OCI-LY7 (cell line): ENCODE measurements at regions of chr1 and their contacts with region 1.

Region 1: DNA sequence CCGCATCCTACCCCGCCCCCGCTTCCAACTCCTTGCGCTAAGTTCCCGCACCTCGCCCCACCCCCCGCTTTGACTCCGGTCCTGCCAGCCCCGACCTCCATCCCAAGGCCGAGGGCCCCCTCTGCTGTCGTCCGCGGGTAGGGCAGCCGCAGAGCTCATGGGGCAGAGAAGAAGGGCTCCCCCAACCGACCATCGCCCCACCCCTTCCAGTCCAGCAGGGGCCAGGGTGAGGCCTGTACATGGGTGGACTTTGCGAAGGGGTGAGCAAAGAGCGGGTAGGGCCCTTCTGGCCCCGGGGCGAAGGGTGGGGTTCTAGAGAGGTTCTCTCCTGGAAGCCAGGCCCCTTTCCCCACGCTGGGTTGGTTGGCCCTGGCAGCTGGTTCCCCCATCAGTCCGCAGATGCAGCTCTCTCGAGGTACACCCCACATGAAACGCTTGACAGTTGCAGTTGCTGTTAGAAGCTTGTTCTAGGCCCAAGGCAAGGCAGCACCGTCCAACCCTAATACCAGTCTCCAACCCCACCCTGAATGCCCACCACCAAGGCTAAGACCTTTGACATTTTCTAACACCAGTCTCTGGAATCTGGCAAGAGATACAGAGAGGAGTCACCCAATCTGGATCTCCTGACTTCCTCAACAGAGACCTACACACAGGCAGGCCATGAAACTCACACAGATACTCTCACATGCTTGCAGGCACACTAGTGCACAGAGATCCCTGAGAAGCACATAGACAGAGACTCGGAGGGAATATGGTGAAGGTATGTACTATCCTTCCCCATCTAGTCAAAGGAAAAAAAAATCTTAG is 25.3 kb upstream of the ADGRB2 start:
- DNase-seq: peak; percentile 91
- H3K4me3 ChIP-seq: peak overlapping the region; percentile 77
- H3K27ac ChIP-seq: peak overlapping the region; percentile 82
- H3K4me1 ChIP-seq: peaks cover 44% of the 10 kb centered on the region
- CTCF ChIP-seq: peak; percentile 90

Region 2: GRCh38 chr1:31548907-31549808 is 240.3 kb before region 1 on chr1:
- CTCF ChIA-PET with region 1: interaction called, 4 read pairs
- POLR2A ChIA-PET with region 1: no interaction called
- intact Hi-C with region 1: loop called (anchors 1 kb)
- DNase-seq: peak; percentile 87
- H3K4me3 ChIP-seq: peak overlapping the region; percentile 2
- H3K27ac ChIP-seq: no peak overlapping the region
- H3K4me1 ChIP-seq: peaks cover 10% of the 10 kb centered on the region
- CTCF ChIP-seq: peak; percentile 99

Region 3: DNA sequence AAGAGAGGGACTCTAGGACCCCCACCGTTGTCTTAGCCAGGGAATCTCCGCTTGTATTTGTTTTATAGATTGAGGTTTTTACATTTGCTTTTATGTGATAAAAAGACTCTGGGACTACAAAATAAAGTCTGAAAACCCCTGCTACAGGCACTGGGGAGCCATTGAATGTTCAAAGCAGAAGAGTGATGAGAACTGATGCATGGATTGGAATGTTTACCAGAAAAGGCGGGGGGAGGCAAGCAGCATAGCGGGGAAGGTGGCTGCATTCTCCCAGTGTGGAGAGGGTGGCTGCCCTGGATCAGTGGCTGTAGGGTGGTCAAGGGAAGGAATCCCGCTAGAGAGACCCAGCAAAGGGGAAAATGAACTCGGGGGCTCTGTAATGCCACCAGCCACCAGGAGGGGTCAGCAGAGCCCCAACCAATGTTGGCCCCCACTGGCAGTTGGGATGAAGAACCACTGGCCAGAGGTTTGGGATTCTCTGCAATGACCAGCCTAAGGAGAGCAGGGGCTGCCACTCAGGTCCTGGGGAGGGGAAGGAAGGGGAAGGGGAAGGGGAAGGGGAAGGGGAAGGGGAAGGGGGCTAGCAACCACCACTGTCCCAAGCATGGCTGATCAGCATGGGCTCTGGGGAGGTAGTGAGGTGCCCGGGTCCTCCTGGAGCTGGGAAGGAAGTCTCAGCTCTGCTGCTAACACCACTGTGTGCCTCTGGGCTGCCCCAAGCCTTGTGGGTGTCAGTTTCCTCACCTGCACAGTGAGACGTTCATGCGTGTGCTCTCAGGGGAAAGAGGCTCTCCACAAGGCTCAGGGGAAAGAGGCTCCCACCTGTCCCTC is 125.6 kb before region 1 on chr1:
- CTCF ChIA-PET with region 1: no interaction called
- POLR2A ChIA-PET with region 1: no interaction called
- intact Hi-C with region 1: loop called (anchors 1 kb)
- DNase-seq: peak; percentile 60
- H3K4me3 ChIP-seq: no peak overlapping the region
- H3K27ac ChIP-seq: no peak overlapping the region
- H3K4me1 ChIP-seq: no peaks in the 10 kb centered on the region
- CTCF ChIP-seq: peak; percentile 91

Region 4: GRCh38 chr1:31745096-31745945 is 44.1 kb before region 1 on chr1:
- CTCF ChIA-PET with region 1: interaction called, 13 read pairs
- POLR2A ChIA-PET with region 1: interaction called, 3 read pairs
- intact Hi-C with region 1: loop called (anchors 1 kb)
- DNase-seq: peak; percentile 82
- H3K4me3 ChIP-seq: peak overlapping the region; percentile 51
- H3K27ac ChIP-seq: peak overlapping the region; percentile 80
- H3K4me1 ChIP-seq: peaks cover 40% of the 10 kb centered on the region
- CTCF ChIP-seq: peak; percentile 83

Region 5: GRCh38 chr1:31831397-31832378 is 42.2 kb after region 1 on chr1:
- CTCF ChIA-PET with region 1: no interaction called
- POLR2A ChIA-PET with region 1: no interaction called
- intact Hi-C with region 1: loop called (anchors 1 kb)
- DNase-seq: no peak
- H3K4me3 ChIP-seq: no peak overlapping the region
- H3K27ac ChIP-seq: no peak overlapping the region
- H3K4me1 ChIP-seq: peaks cover 44% of the 10 kb centered on the region
- CTCF ChIP-seq: no peak